ENCODE measurements at regions of chr3 and their contacts with region 1.

Region 1: GRCh38 chr3:175585898-175586297 is 726.8 kb downstream of the NAALADL2 start:
- DNase-seq: peak; percentile 87
- ATAC-seq: peak; percentile 98
- H3K4me3 ChIP-seq: no peak overlapping the region
- H3K27ac ChIP-seq: peak overlapping the region; percentile 42
- H3K4me1 ChIP-seq: peaks cover 13% of the 10 kb centered on the region
- H3K27me3 ChIP-seq: no peaks in the 10 kb centered on the region
- CTCF ChIP-seq: no peak

Region 2: GRCh38 chr3:175546115-175546684 is 39.7 kb before region 1 on chr3:
- CTCF ChIA-PET with region 1: no interaction called
- POLR2A ChIA-PET with region 1: no interaction called
- intact Hi-C with region 1: no loop called
- DNase-seq: no peak
- ATAC-seq: no peak
- H3K4me3 ChIP-seq: no peak overlapping the region
- H3K27ac ChIP-seq: no peak overlapping the region
- H3K4me1 ChIP-seq: no peaks in the 10 kb centered on the region
- H3K27me3 ChIP-seq: no peaks in the 10 kb centered on the region
- CTCF ChIP-seq: no peak

Region 3: GRCh38 chr3:175598740-175599139 is 12.8 kb after region 1 on chr3:
- CTCF ChIA-PET with region 1: no interaction called
- POLR2A ChIA-PET with region 1: no interaction called
- intact Hi-C with region 1: loop called (anchors 1 kb)
- DNase-seq: no peak
- ATAC-seq: no peak
- H3K4me3 ChIP-seq: no peak overlapping the region
- H3K27ac ChIP-seq: no peak overlapping the region
- H3K4me1 ChIP-seq: peaks cover 6% of the 10 kb centered on the region
- H3K27me3 ChIP-seq: no peaks in the 10 kb centered on the region
- CTCF ChIP-seq: no peak

Region 4: DNA sequence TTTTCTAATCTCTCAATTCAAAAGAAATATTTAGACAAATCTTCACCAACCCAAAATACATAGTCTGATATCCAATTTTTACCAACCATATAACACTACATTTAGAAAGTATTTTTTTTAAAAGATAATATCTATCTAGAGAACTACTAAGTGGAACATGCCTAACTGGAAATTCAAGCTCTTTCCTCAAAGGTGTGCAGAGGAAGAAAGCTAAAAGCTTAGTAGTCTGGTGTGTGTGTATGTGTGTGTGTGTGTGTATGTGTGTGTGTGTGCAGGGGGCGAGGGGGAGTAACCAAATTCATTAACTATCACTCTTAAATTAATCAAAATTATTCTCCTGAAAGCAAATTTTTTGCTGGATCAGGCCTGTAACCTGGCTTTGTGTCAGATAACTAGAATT is 70.6 kb after region 1 on chr3:
- CTCF ChIA-PET with region 1: no interaction called
- POLR2A ChIA-PET with region 1: interaction called, 38 read pairs
- intact Hi-C with region 1: no loop called
- DNase-seq: peak; percentile 34
- ATAC-seq: no peak
- H3K4me3 ChIP-seq: no peak overlapping the region
- H3K27ac ChIP-seq: no peak overlapping the region
- H3K4me1 ChIP-seq: peaks cover 8% of the 10 kb centered on the region
- H3K27me3 ChIP-seq: no peaks in the 10 kb centered on the region
- CTCF ChIP-seq: no peak